HCT116 (cell line): ENCODE measurements at regions of chr19 and their contacts with region 1.

Region 1: DNA sequence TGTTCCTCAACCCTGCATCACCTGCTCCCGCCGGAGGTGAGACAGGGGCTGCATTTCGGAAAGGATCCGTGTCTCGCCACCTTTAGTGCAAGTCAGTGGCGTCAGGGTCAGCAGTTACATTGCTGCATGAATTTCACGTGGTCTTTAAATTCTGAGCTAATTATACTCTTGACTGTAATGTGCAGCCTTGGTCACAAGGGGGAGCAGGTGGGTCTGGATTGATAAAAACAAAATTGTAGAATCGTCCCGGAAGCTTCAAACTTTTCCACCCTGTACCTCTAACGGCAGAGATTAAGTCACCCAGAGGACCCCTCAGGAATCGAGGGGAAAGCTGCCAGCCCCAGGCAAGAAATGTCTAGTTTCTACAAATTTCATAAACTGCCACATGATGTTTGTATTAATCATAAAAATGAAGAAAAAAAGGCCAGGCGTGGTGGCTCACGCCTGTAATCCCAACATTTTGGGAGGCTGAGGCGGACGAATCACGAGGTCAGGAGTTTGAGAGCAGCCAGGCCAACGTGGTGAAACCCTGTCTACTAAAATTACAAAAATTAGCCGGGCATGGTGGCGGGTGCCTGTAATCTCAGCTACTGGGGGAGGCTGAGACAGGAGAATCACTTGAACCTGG is 20.2 kb downstream of the BBC3 start:
- DNase-seq: no peak
- ATAC-seq: peak; percentile 61
- H3K4me3 ChIP-seq: no peak overlapping the region
- H3K27ac ChIP-seq: peak overlapping the region; percentile 12
- H3K4me1 ChIP-seq: peaks cover 5 to 12% of the 10 kb centered on the region in 2 experiments; a peak in 3 of 4 replicates
- H3K27me3 ChIP-seq: no peaks in the 10 kb centered on the region
- CTCF ChIP-seq: peak; percentile 78 to 81 (median 79)
- POLR2A ChIP-seq: no peak
- RAD21 ChIP-seq: peak; percentile 80

Region 2: GRCh38 chr19:47186446-47187334 is 24.1 kb before region 1 on chr19:
- CTCF ChIA-PET with region 1: interaction called, 10 read pairs
- POLR2A ChIA-PET with region 1: no interaction called
- RAD21 ChIA-PET with region 1: no interaction called
- intact Hi-C with region 1: no loop called
- DNase-seq: no peak
- ATAC-seq: no peak
- H3K4me3 ChIP-seq: no peak overlapping the region
- H3K27ac ChIP-seq: peak overlapping the region; percentile 76
- H3K4me1 ChIP-seq: peaks cover 76 to 83% of the 10 kb centered on the region in 2 experiments
- H3K27me3 ChIP-seq: no peaks in the 10 kb centered on the region
- CTCF ChIP-seq: no peak
- POLR2A ChIP-seq: no peak
- RAD21 ChIP-seq: no peak

Region 3: DNA sequence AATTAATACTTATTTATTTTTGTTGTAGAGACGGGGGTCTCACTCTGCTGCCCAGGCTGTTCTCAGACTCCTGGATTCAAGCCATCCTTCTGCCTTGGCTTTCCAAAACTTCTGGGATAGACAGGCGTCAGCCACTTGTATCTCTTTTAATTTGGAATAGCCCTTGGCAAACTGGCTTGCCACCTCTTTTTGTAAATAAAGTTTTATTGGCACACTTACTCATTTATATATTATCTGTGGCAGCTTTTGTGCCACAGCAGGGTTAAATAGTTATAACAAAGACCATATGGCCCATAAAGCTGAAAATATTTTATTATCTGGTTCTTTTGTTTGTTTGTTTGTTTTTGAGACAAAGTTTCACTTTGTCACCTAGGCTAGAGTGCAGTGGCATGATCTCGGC is 10.3 kb before region 1 on chr19:
- CTCF ChIA-PET with region 1: interaction called, 11 read pairs
- POLR2A ChIA-PET with region 1: interaction called, 3 read pairs
- RAD21 ChIA-PET with region 1: no interaction called
- intact Hi-C with region 1: no loop called
- DNase-seq: no peak
- ATAC-seq: no peak
- H3K4me3 ChIP-seq: no peak overlapping the region
- H3K27ac ChIP-seq: no peak overlapping the region
- H3K4me1 ChIP-seq: no peaks in the 10 kb centered on the region
- H3K27me3 ChIP-seq: no peaks in the 10 kb centered on the region
- CTCF ChIP-seq: no peak
- POLR2A ChIP-seq: no peak
- RAD21 ChIP-seq: no peak

Region 4: DNA sequence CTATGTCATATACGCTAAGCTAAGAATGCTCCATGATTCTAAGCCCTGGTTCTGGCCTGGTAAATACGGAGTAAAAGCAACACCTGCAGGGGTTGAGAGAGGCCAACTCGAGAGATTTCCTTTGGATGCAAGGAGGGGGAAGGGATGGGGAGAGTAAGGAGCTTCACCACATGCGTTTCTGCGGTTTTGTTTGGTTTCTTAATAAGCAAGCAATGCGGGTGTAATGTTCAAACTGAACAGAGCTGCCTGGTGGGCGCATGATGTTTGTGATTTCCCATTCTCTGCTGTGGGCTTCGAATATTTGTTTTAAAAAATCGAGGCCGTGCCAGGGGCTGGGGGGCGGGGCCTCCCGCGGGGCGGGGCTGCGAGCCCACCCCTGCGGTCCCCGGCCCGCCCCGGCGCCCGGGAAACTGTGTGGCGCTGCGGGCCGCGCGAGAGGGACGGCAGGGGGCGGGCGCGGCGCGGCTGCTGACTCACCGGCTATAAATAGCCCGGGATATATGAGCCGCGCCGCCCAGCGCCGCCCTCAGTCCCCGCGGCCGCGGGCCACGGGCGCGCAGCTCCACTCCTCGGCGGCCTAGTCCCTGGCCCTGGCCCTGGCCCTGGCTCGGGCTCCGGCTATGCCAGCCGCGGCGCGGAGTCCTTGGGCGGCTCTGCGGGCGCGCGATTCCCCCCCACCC is 15.1 kb after region 1 on chr19:
- CTCF ChIA-PET with region 1: interaction called, 16 read pairs
- POLR2A ChIA-PET with region 1: interaction called, 39 read pairs
- RAD21 ChIA-PET with region 1: no interaction called
- intact Hi-C with region 1: no loop called
- DNase-seq: no peak
- ATAC-seq: peak; percentile 58
- H3K4me3 ChIP-seq: peak overlapping the region; percentile 76 to 78
- H3K27ac ChIP-seq: peak overlapping the region; percentile 97
- H3K4me1 ChIP-seq: peaks cover 17 to 52% of the 10 kb centered on the region in 2 experiments
- H3K27me3 ChIP-seq: no peaks in the 10 kb centered on the region
- CTCF ChIP-seq: no peak
- POLR2A ChIP-seq: peak; percentile 99
- RAD21 ChIP-seq: no peak

Region 5: DNA sequence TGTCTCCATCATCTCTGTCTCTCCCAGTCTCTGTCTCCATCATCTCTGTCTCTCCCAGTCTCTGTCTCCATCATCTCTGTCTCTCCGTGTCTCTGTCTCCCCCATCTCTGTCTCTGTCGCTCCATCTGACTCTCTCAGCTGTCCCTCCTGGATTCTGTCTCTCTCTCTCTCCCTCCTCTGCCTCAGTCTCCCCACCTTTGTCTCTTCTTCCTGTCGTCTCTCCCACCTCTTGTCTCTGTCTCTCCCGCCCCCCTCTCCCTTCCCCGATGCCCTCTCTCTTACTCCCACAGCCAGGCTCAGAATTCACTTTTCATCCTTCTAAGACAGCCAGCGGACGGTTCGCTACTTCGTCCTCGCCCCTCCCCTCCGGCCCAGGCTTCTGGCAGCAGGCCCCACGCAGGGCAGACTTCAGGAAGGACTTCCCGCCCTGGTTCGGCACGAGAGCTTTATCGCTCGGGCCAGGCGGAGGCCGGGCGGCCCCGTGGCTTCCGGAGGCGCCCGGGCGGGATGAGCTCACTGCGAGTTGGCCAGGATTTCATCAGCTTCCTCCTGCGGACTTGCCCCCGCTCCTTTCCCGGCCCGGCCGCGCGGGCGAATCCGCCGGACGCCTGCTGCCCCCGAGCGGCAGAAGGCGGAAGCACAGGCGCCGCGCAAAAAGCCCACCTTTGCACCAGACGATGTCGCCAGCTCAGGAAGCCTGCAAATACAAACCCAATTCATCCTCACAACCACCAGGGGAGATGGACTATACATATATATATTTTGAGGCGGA is 33.2 kb after region 1 on chr19:
- CTCF ChIA-PET with region 1: interaction called, 103 read pairs
- POLR2A ChIA-PET with region 1: interaction called, 28 read pairs
- RAD21 ChIA-PET with region 1: interaction called, 13 to 14 read pairs
- intact Hi-C with region 1: loop called (anchors 1 kb)
- DNase-seq: peak; percentile 85
- ATAC-seq: peak; percentile 80
- H3K4me3 ChIP-seq: peak overlapping the region; percentile 52 to 56
- H3K27ac ChIP-seq: peak overlapping the region; percentile 90
- H3K4me1 ChIP-seq: peaks cover 32 to 50% of the 10 kb centered on the region in 2 experiments
- H3K27me3 ChIP-seq: no peaks in the 10 kb centered on the region
- CTCF ChIP-seq: peak; percentile 87 to 97 (median 97)
- POLR2A ChIP-seq: no peak
- RAD21 ChIP-seq: peak; percentile 99